ENCODE measurements at regions of chr10 and their contacts with region 1.

Region 1: GRCh38 chr10:75525646-75526045 is 94.2 kb downstream of the LRMDA start:
- DNase-seq: no peak
- ATAC-seq: no peak
- H3K4me3 ChIP-seq: no peak overlapping the region
- H3K4me3 Mint-ChIP-seq: no peak overlapping the region
- H3K27ac ChIP-seq: no peak overlapping the region
- H3K27ac Mint-ChIP-seq: no peak overlapping the region
- H3K4me1 ChIP-seq: no peaks in the 10 kb centered on the region
- H3K4me1 Mint-ChIP-seq: no peaks in the 10 kb centered on the region
- H3K27me3 ChIP-seq: no peaks in the 10 kb centered on the region
- H3K27me3 Mint-ChIP-seq: peaks cover 20 to 27% of the 10 kb centered on the region in 2 donors

Region 2: GRCh38 chr10:75607576-75607975 is 81.9 kb after region 1 on chr10:
- CTCF ChIA-PET with region 1: interaction called in 1 of 2 experiments, 13 read pairs
- POLR2A ChIA-PET with region 1: no interaction called
- DNase-seq: no peak
- ATAC-seq: no peak
- H3K4me3 ChIP-seq: no peak overlapping the region
- H3K4me3 Mint-ChIP-seq: no peak overlapping the region
- H3K27ac ChIP-seq: no peak overlapping the region
- H3K27ac Mint-ChIP-seq: no peak overlapping the region
- H3K4me1 ChIP-seq: no peaks in the 10 kb centered on the region
- H3K4me1 Mint-ChIP-seq: no peaks in the 10 kb centered on the region
- H3K27me3 ChIP-seq: peaks cover 0 to 5% of the 10 kb centered on the region in 2 experiments
- H3K27me3 Mint-ChIP-seq: peaks cover 4 to 23% of the 10 kb centered on the region in 2 donors

Region 3: DNA sequence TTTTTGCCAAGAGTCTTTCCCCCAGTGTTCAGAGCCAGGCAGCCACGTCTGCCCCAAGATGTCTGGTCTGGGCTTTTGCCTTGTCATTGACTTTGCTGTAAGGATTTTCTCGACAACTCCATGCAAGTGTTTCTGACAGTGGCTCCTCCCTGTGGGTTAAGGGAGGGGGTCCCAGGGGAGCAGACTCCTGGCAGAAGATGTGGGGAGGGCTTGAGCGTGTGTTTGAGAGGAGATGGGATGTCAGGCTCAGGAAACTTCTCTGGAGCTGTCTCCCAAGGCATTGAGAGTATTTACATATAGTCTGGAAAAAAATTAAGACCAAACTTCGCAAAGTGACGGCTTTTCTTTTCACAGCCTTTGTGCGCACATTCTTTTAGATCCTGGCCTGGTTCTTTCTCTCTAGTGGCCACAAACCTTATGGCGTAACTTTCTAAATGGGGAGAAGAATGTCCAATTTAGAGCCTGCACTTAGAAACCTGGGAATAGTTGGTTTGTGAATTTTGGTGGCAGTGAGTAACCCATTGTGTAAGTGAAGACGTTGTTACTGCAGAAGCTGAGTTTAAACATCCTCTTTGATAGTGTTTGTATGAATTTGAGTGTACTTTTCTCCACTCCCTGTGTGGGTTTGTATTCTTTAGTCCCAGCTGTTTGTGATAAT is 107.3 kb after region 1 on chr10:
- CTCF ChIA-PET with region 1: no interaction called
- POLR2A ChIA-PET with region 1: no interaction called
- DNase-seq: no peak
- ATAC-seq: no peak
- H3K4me3 ChIP-seq: no peak overlapping the region
- H3K4me3 Mint-ChIP-seq: no peak overlapping the region
- H3K27ac ChIP-seq: no peak overlapping the region
- H3K27ac Mint-ChIP-seq: no peak overlapping the region
- H3K4me1 ChIP-seq: no peaks in the 10 kb centered on the region
- H3K4me1 Mint-ChIP-seq: no peaks in the 10 kb centered on the region
- H3K27me3 ChIP-seq: no peaks in the 10 kb centered on the region
- H3K27me3 Mint-ChIP-seq: peaks cover 12 to 17% of the 10 kb centered on the region in 2 donors

Measured in T-cell (primary cell).